ENCODE measurements at regions of chr10 and their contacts with region 1.

Region 1: GRCh38 chr10:71359364-71360046 is 37.2 kb upstream of the CDH23 start:
- DNase-seq: peak; percentile 83
- CTCF ChIP-seq: no peak

Region 2: GRCh38 chr10:71094712-71095390 is 264.7 kb before region 1 on chr10:
- CTCF ChIA-PET with region 1: no interaction called
- POLR2A ChIA-PET with region 1: no interaction called
- DNase-seq: peak; percentile 14
- CTCF ChIP-seq: no peak

Region 3: GRCh38 chr10:71371750-71372166 is 12.3 kb after region 1 on chr10:
- CTCF ChIA-PET with region 1: interaction called, 45 read pairs
- POLR2A ChIA-PET with region 1: no interaction called
- DNase-seq: peak; percentile 45
- CTCF ChIP-seq: no peak

Region 4: DNA sequence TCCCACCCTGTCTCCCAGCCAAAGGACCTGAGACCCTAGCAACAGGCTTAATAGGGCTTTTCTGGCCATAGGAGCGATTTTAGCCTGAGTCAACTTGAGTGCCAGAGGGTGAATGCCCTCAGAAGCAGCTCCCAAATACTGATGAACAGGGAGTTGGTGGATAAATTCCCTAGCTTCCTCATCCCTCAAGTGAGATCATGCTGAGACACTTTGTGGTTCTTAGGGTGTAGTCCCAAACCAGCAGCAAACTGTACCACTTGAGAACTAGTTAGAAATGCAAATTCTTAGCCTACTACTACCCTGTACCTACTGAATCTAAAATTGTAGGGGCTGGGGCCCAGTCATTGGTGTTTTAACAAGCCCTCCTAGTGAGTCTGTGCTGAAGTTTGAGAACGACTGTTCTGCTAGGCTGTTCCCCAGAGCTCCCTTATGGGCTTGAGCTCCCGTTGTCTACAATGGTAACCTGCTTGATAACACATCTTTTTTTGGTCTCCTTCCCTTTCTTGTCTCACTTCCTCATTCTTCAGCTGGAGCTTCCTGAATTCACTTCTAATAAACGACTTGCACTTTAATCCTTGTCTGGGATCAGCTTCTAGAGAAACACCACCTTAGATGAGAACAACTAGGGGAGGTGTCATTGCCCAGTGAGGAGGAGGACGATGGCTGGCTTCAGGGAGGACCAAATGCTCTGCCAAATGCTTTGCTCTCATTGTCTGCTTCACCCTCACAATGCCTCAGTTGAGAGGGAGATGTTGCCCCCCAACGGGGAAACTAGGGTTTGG is 19.0 kb after region 1 on chr10:
- CTCF ChIA-PET with region 1: interaction called, 45 read pairs
- POLR2A ChIA-PET with region 1: no interaction called
- DNase-seq: no peak
- CTCF ChIP-seq: no peak

Region 5: DNA sequence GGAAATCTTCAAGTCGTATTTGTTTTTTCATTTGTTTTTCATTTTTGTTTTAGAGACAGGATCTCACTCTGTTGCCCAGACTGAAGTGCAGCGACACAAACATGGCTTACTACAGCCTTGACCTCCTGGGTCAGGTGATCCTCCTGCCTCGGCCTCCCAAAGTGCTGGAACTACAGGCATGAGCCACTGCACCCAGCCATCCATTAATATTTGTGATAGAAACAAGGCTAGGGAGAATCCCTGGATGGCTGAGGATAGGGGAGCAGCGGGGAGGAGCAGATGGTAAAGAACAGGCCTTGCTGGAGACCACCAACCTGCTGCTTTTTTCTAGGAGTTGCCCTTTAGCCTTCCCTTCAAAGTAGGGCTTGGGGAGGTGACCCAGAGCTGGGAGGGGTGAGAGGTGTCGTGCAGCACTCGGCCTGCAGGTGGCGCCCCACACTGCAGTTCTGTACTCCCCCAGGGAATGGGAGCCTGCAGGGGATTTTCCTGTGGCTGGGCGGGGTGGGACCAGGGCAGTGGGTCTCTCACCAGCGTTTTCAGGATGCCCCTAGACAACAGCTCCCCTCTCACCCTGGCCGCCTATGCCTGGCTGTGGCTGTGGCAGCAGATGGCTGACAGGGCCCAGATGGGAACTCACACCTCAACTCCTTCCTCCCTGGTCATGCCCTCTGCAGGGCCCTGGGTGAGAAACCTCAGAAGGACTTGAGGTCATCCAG is 24.6 kb after region 1 on chr10:
- CTCF ChIA-PET with region 1: interaction called, 45 read pairs
- POLR2A ChIA-PET with region 1: no interaction called
- DNase-seq: peak; percentile 79
- CTCF ChIP-seq: peak; percentile 98

Region 6: DNA sequence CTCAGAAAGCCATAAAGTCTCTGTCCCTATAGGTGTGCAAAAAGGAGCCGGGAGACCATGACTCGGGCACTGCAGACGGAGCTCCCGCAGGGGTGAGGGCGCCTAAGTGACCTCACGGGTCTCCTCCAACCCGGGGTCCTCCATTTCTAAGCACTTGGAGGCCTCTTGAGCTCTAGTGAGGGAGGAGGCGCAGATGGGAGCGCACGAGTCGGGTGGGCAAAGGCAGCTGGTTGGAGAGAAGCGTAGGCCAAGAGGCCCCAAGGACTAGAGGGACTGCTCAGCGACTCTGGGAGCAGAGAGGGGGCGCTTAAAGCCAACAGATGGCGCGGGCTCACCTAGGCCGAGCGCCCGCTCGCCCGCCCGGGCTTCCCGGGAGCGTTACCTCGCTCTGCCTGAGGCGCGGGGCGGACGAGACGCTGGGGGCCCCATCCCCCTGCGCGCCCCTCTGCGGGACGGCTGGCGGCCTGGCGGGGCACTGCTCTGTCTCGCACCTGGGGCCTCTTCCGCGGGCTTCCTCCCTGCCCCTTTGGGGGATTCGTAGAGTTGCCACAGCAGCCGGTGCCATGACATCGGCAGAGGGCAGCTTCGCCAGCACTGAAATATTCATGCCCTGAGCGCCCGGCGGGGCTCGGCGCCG is 36.7 kb after region 1 on chr10:
- CTCF ChIA-PET with region 1: no interaction called
- POLR2A ChIA-PET with region 1: no interaction called
- DNase-seq: peak; percentile 56
- CTCF ChIP-seq: peak; percentile 33